Gastrocnemius medialis (tissue), 4 donors: ENCODE measurements at regions of chr11 and their contacts with region 1.

Region 1: DNA sequence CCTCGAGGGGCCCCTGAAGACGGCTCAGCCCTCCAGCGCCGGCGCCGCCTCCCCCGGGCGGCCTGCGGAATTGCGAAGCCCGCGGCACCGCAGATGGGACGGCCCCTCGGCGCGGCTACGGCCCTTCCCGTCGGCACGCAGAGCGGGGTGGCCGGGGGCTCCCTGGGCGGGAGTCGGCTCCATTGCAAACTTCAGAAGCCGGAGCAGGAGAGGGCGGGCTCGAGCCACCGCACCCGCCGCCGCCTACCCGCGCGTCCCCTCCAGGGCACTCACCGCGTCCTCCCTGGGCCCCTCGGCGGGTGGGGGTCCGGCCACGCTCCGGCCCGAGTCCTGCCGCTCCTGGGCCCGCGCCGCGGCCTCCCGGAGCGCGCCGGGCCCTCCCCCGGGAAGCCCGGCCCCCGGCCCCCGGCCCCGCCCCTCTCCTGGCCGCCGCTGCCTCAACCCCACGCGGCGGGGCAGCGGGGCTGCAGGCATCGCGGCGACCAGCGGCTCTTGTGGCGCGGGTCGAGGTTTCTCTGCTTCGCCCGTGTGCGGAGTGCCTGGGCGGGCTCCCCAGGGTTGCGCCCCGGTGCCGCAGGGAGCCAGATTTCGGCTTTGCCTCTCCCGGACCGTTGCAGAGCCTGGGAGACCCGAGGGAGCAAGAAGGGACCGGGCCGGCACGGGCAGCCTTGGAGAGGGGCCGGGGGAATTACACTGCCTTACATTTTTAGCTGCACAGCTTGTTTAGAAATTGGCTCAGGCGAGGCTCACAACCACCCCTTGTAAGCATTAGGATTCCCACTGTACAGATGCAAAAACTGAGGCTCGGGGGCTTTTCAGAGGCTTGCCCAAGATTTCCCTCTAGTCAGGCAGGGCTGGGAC is at the start of gene PACSIN3:
- DNase-seq: peak in 1 of 2 donors; percentile 65
- ATAC-seq: peak; percentile 28 to 43
- H3K4me3 ChIP-seq: peak within 1 kb of the TSS; percentile 68 to 91 (median 84)
- H3K27ac ChIP-seq: peak within 1 kb of the TSS; percentile 97 to 99 (median 98)
- H3K4me1 ChIP-seq: peaks cover 45 to 62% of the 10 kb centered on the region in 2 donors
- H3K27me3 ChIP-seq: no peaks in the 10 kb centered on the region
- CTCF ChIP-seq: peak in 3 of 5 experiments; percentile 13 to 34 (median 28)
- POLR2A ChIP-seq: peak in 1 of 2 donors; percentile 59
- total RNA-seq, gene PACSIN3: 129 to 369 (median 205) TPM

Region 2: DNA sequence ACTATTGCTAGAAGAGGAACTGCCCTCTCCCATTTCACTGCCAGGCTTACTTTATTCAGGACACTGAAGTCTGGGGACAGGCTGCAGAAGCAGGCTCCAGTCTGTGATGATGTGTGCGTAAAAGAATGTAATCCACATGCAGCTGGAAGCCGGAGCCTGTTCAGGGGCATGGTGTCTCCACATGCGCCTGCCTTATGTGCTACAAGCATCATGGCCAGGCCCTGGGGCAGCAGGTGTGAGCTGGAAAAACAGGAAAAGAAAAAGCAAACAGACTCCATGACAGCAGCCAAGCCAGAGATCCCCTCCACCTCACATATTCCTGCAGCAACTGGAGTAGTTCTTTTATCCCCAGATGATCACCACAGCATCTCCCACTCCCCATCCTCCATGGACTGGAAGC is 43.0 kb before region 1 on chr11:
- in situ Hi-C with region 1: no loop called
- intact Hi-C with region 1: no loop called
- DNase-seq: no peak
- ATAC-seq: peak; percentile 20 to 36
- H3K4me3 ChIP-seq: no peak overlapping the region
- H3K27ac ChIP-seq: no peak overlapping the region
- H3K4me1 ChIP-seq: peaks cover 5 to 6% of the 10 kb centered on the region in 2 donors
- H3K27me3 ChIP-seq: no peaks in the 10 kb centered on the region
- CTCF ChIP-seq: no peak
- POLR2A ChIP-seq: no peak

Region 3: GRCh38 chr11:47213985-47214564 is 27.8 kb after region 1 on chr11:
- in situ Hi-C with region 1: no loop called
- intact Hi-C with region 1: loop called (anchors 1 kb)
- DNase-seq: peak; percentile 92 to 94
- ATAC-seq: peak; percentile 95 to 96
- H3K4me3 ChIP-seq: peak overlapping the region; percentile 69 to 89 (median 70)
- H3K27ac ChIP-seq: peak overlapping the region; percentile 95 to 98 (median 97)
- H3K4me1 ChIP-seq: peaks cover 14 to 23% of the 10 kb centered on the region in 2 donors
- H3K27me3 ChIP-seq: no peaks in the 10 kb centered on the region
- CTCF ChIP-seq: no peak
- POLR2A ChIP-seq: peak; percentile 64 to 74

Region 4: GRCh38 chr11:47259178-47259977 is 73.1 kb after region 1 on chr11:
- in situ Hi-C with region 1: loop called in 1 of 4 experiments (anchors 5 kb)
- intact Hi-C with region 1: no loop called
- DNase-seq: no peak
- ATAC-seq: peak; percentile 21 to 54
- H3K4me3 ChIP-seq: peak overlapping the region in 1 of 4 donors; percentile 51
- H3K27ac ChIP-seq: peak overlapping the region; percentile 7 to 80 (median 75)
- H3K4me1 ChIP-seq: peaks cover 43 to 48% of the 10 kb centered on the region in 2 donors
- H3K27me3 ChIP-seq: no peaks in the 10 kb centered on the region
- CTCF ChIP-seq: peak; percentile 20 to 71 (median 57)
- POLR2A ChIP-seq: no peak

Region 5: GRCh38 chr11:47355283-47356128 is 169.2 kb after region 1 on chr11:
- in situ Hi-C with region 1: loop called in 1 of 4 experiments (anchors 10 kb)
- intact Hi-C with region 1: no loop called
- DNase-seq: peak; percentile 93 to 97
- ATAC-seq: peak; percentile 94 to 97
- H3K4me3 ChIP-seq: peak overlapping the region; percentile 53 to 70 (median 60)
- H3K27ac ChIP-seq: peak overlapping the region; percentile 80 to 92 (median 85)
- H3K4me1 ChIP-seq: peaks cover 10 to 11% of the 10 kb centered on the region in 2 donors
- H3K27me3 ChIP-seq: no peaks in the 10 kb centered on the region
- CTCF ChIP-seq: peak; percentile 92 to 98 (median 96)
- POLR2A ChIP-seq: no peak

Region 6: DNA sequence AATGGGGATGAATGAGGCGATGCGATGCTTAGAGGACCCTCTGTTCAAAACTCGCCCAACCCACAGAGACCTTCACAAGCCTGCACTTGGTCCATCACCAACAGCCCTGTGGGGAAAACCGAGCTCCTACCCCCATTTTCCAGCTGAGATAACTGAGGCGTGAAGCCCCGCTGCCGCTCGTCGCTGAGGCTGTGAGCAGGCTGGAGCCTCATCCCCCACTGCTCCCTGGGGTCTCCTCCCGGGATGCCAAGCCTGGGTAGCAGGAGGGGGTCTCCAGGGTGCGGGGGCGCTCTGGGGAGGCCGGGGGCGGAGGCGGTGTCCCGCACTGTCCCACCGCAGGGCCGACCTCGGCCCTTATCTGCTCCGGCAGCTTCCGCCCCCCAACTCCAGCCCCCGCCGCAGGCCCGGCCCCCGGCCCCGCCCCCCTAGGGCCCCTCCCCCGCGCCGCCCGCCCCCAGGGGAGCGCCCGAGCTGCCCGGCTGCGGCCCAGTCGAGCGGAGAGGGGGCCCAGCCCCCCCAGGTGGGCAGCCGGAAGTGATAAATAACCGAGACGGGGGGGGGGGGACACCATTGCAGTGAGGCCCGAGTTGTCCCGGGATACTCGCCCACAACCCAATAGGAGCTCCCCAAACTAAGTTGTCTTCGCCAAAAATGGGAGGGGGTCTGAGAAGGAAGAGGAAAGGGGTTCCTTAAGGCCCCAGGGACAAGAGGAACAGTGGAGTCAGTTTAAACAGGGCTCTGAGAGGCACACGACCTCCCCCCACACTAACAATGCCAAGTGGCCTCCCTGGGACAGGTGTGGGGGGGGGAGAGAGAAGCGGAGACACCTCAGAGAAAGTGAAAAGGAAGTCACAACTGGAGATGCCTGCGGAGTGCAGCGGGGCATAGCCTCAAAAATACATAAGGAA is 213.8 kb after region 1 on chr11:
- in situ Hi-C with region 1: no loop called
- intact Hi-C with region 1: no loop called
- DNase-seq: no peak
- ATAC-seq: no peak
- H3K4me3 ChIP-seq: peak overlapping the region; percentile 45 to 57 (median 52)
- H3K27ac ChIP-seq: peak overlapping the region; percentile 58 to 68 (median 62)
- H3K4me1 ChIP-seq: peaks cover 0 to 2% of the 10 kb centered on the region in 2 donors
- H3K27me3 ChIP-seq: no peaks in the 10 kb centered on the region
- CTCF ChIP-seq: no peak
- POLR2A ChIP-seq: peak in 1 of 2 donors; percentile 36

Region 7: DNA sequence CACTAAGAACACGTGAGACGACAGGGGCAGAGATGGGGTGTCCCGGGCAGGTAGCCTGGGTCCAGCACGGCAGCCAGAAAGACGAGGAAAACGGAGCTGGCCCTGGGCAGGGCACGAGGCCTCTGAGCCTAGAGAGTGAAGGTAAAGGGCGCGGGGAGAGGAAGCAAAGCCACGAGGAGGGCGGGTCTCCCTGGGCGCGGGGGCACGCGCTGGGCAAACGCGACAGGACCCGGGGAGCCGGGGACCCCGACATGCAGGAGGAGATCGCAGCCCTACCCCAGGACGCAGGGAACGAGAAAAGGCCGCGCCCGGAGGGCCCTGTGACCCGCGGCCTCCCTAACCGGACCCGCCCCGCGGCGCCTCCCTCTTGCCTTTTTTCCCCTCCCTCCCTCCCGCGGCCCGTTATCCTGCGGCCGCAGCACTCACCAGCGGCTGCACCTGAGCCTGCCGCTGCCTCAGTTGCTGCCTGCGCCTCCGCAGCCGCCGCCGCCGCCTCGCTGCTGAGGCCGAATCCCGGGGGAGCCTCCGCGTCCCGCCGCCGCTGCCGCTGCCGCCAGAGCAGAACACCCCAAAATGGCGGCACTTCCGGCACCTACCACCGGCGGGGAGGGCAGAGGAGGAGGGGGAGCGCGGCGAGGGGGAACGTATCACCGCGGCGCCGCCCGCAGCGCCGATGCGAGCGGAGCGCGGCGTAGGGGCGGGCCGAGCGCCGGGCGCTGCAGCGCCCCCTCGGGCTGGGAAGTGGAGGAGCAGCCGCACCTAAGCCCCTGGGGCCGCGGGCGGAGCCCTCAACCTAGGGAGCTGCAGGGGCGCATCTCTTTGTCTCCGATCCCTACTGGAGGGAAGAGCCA is 366.5 kb after region 1 on chr11 and contains the start of gene CELF1:
- in situ Hi-C with region 1: no loop called
- intact Hi-C with region 1: loop called (anchors 10 kb)
- DNase-seq: peak; percentile 84 to 90
- ATAC-seq: peak; percentile 74 to 78
- H3K4me3 ChIP-seq: peak within 1 kb of the TSS; percentile 91 to 95 (median 92)
- H3K27ac ChIP-seq: peak within 1 kb of the TSS; percentile 96 to 99 (median 97)
- H3K4me1 ChIP-seq: peaks cover 45 to 62% of the 10 kb centered on the region in 2 donors
- H3K27me3 ChIP-seq: no peaks in the 10 kb centered on the region
- CTCF ChIP-seq: peak; percentile 78 to 96 (median 94)
- POLR2A ChIP-seq: peak; percentile 88 to 92
- total RNA-seq, gene CELF1: 106 to 185 (median 136) TPM